MCF 10A (cell line): ENCODE measurements at regions of chr11 and their contacts with region 1.

Region 1: GRCh38 chr11:101456812-101457211 is 127.0 kb downstream of the TRPC6 start:
- DNase-seq: no peak
- H3K4me3 Mint-ChIP-seq: no peak overlapping the region
- H3K27ac Mint-ChIP-seq: no peak overlapping the region
- H3K4me1 Mint-ChIP-seq: peaks cover 7% of the 10 kb centered on the region
- H3K27me3 Mint-ChIP-seq: no peaks in the 10 kb centered on the region
- CTCF ChIP-seq: peak; percentile 34

Region 2: DNA sequence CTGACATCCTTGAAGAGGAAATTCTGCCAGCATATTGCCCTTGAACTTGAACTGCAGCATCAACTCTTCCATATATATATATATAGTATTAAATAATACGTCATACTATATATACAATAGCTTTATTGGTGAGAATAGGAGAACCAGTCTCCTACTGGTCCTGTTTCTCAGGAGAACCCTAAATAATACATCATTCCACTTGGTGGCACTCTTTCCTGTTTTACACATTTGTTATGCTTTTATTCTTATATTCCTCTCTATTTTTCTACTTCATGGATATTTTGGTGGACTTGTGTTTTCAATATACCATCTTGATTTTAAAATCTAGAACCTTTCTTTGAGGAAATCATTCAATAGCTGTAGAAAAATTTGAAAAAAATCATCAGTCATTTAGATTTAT is 66.3 kb before region 1 on chr11:
- CTCF ChIA-PET with region 1: no interaction called
- POLR2A ChIA-PET with region 1: no interaction called
- intact Hi-C with region 1: no loop called
- DNase-seq: peak; percentile 16
- H3K4me3 Mint-ChIP-seq: no peak overlapping the region
- H3K27ac Mint-ChIP-seq: no peak overlapping the region
- H3K4me1 Mint-ChIP-seq: no peaks in the 10 kb centered on the region
- H3K27me3 Mint-ChIP-seq: peaks cover under 1% of the 10 kb centered on the region
- CTCF ChIP-seq: peak; percentile 16

Region 3: GRCh38 chr11:101444164-101444563 is 12.6 kb before region 1 on chr11:
- CTCF ChIA-PET with region 1: interaction called, 16 read pairs
- POLR2A ChIA-PET with region 1: no interaction called
- intact Hi-C with region 1: no loop called
- DNase-seq: no peak
- H3K4me3 Mint-ChIP-seq: no peak overlapping the region
- H3K27ac Mint-ChIP-seq: no peak overlapping the region
- H3K4me1 Mint-ChIP-seq: peaks cover 17% of the 10 kb centered on the region
- H3K27me3 Mint-ChIP-seq: no peaks in the 10 kb centered on the region
- CTCF ChIP-seq: no peak

Region 4: DNA sequence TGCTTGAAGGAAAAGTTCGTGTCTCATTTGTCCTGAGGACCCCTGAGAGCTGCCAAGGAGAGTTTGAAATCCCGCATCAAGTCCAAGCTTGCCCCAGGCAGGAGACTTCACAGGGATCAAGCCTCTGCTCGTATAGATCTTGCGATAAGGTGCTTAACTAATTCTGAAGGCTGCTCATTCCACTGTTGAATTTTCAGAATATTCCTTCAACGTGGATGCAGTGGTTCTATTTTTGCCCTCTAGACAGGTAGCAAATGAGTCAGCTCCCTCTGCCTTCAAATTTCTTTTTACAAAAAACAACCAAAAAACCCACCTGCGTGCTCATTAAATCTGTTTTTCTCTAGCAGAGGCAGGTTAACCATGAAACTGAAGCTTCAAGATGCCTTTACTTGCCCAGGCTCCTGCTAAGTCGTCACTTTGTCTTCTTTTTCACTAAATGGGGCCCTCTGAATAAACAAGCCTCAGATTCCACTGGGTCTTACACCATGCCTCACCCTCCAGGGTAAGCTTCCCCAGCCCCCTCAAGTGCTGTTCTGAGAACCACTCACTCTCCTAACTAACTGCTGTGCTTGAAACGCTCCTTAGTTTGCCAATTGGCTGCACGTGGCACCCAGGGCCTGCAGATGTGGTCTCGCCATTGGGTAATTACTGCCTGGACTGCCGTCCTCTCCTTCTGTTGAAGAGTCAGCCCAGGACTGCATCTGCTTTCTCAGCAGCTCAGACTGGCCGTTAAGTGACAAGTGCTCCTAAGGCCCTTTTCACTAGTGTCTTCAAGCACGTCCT is 22.0 kb after region 1 on chr11:
- CTCF ChIA-PET with region 1: interaction called, 10 read pairs
- POLR2A ChIA-PET with region 1: interaction called, 6 read pairs
- intact Hi-C with region 1: no loop called
- DNase-seq: no peak
- H3K4me3 Mint-ChIP-seq: peak overlapping the region; percentile 1
- H3K27ac Mint-ChIP-seq: no peak overlapping the region
- H3K4me1 Mint-ChIP-seq: peaks cover 12% of the 10 kb centered on the region
- H3K27me3 Mint-ChIP-seq: no peaks in the 10 kb centered on the region
- CTCF ChIP-seq: no peak

Region 5: DNA sequence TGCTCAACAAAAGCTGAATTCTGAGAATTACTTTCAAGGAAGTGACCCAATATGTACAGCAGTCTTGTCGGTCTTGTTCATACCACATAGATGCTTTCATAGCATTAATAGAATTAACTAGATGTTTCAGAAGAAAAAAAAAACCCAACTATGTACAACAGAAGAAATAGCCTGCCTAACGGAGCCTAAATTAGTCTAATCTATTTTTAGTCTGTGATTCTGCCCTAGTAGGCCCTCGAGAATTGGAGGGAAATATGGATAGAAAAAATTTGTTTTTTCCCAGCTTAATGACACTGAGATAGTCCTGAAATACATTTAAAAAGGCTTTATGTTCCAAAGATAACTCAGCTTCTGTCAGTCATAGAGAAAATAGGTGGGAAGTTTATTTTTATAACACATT is 144.1 kb after region 1 on chr11:
- CTCF ChIA-PET with region 1: no interaction called
- POLR2A ChIA-PET with region 1: no interaction called
- intact Hi-C with region 1: no loop called
- DNase-seq: no peak
- H3K4me3 Mint-ChIP-seq: no peak overlapping the region
- H3K27ac Mint-ChIP-seq: no peak overlapping the region
- H3K4me1 Mint-ChIP-seq: no peaks in the 10 kb centered on the region
- H3K27me3 Mint-ChIP-seq: no peaks in the 10 kb centered on the region
- CTCF ChIP-seq: no peak

Region 6: GRCh38 chr11:101848262-101848661 is 391.4 kb after region 1 on chr11:
- CTCF ChIA-PET with region 1: interaction called, 213 read pairs
- POLR2A ChIA-PET with region 1: interaction called, 7 read pairs
- intact Hi-C with region 1: loop called (anchors 1 kb)
- DNase-seq: peak; percentile 43
- H3K4me3 Mint-ChIP-seq: no peak overlapping the region
- H3K27ac Mint-ChIP-seq: no peak overlapping the region
- H3K4me1 Mint-ChIP-seq: no peaks in the 10 kb centered on the region
- H3K27me3 Mint-ChIP-seq: no peaks in the 10 kb centered on the region
- CTCF ChIP-seq: peak; percentile 47

Region 7: GRCh38 chr11:102637731-102638130 is 1180.9 kb after region 1 on chr11:
- CTCF ChIA-PET with region 1: no interaction called
- POLR2A ChIA-PET with region 1: no interaction called
- intact Hi-C with region 1: no loop called
- DNase-seq: peak; percentile 72
- H3K4me3 Mint-ChIP-seq: no peak overlapping the region
- H3K27ac Mint-ChIP-seq: no peak overlapping the region
- H3K4me1 Mint-ChIP-seq: no peaks in the 10 kb centered on the region
- H3K27me3 Mint-ChIP-seq: no peaks in the 10 kb centered on the region
- CTCF ChIP-seq: no peak